ENCODE measurements at regions of chr3 and their contacts with region 1.

Region 1: DNA sequence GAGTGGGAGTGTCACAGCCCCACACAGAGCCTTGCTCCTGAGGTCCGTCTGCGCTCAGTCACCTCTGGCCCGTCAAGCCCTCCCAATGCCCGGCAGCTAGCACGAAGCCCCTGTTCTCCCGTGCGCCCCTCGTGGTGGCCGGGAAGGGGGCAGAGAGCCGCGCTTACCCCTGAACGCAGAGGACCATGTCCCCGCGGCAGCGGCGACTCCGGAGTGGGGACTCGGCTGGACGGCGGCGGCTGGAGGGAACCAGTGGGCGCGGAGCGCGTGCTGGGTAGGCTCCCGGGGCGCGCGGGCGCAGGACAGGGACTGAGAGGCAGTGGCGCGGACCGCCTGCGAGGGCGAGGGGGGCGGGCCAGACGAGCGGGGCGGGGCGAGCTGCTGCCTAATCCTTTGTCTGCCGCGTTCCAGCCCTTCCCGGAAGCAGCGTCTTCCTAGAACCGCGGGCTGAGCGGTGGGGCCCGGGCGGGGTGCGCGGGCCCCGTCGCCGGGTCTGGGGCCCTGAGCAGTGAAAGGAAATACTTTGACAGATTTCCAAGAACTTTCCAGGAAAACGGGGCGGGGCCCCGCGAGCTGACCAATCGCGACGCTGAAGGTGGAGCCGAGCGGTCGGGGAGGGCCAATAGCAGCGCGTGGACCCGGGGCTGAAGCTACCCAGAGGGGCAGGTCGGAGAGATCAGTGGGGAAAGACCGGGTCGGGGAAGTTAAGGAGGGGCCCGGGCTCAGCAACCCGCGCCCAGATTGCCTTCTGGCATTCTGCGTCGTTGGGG is at the start of gene CISH:
- DNase-seq: peak; percentile 100
- H3K4me3 Mint-ChIP-seq: peak within 1 kb of the TSS; percentile 93
- H3K27ac Mint-ChIP-seq: peak within 1 kb of the TSS; percentile 98
- H3K4me1 Mint-ChIP-seq: peaks cover 37% of the 10 kb centered on the region
- H3K27me3 Mint-ChIP-seq: no peaks in the 10 kb centered on the region
- total RNA-seq, gene CISH: 359 and 361 TPM in 2 replicates

Region 2: DNA sequence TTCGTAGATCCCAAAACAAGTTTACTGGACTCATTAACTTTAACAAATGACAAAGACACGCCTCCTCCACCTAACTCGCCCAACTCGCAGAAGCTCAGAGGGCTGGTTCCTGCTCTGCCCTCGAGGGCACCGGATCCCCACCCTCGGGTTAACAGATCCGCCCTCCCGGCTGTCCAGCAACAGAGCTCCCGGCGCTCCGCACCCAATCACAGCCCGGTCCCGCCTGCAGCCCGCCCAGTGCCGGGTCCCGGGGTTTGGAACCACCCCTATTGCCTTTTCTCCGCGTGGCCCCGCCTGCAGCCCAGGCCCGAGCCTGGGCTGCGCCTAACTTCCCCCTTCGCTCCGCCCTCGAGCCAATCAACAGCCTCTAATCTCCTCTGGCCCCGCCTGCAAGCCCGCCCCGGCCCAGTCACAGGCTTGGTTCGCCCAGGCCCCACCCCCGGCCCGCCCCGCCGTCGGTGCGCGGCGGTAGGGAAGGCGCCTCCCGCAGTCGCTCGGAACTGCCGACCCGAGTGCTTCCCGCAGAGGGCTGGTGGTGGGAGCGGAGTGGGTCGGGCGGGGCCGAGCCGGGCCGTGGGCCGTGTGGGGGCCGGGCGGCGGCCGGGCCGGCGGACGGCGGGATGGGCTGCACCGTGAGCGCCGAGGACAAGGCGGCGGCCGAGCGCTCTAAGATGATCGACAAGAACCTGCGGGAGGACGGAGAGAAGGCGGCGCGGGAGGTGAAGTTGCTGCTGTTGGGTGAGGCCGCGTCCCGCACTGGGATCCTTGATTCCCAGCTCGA is 375.7 kb before region 1 on chr3 and contains the start of gene GNAI2:
- intact Hi-C with region 1: loop called (anchors 5 kb)
- DNase-seq: peak; percentile 100
- H3K4me3 Mint-ChIP-seq: peak within 1 kb of the TSS; percentile 99
- H3K27ac Mint-ChIP-seq: peak within 1 kb of the TSS; percentile 94
- H3K4me1 Mint-ChIP-seq: peaks cover 31% of the 10 kb centered on the region
- H3K27me3 Mint-ChIP-seq: no peaks in the 10 kb centered on the region
- total RNA-seq, gene GNAI2: 225 and 232 TPM in 2 replicates

Region 3: GRCh38 chr3:50519471-50520089 is 92.1 kb before region 1 on chr3:
- intact Hi-C with region 1: loop called (anchors 1 kb)
- DNase-seq: peak; percentile 93
- H3K4me3 Mint-ChIP-seq: no peak overlapping the region
- H3K27ac Mint-ChIP-seq: no peak overlapping the region
- H3K4me1 Mint-ChIP-seq: peaks cover 6% of the 10 kb centered on the region
- H3K27me3 Mint-ChIP-seq: peaks cover 26% of the 10 kb centered on the region

Region 4: GRCh38 chr3:50600841-50601591 is 10.6 kb before region 1 on chr3:
- intact Hi-C with region 1: loop called (anchors 1 kb)
- DNase-seq: peak; percentile 95
- H3K4me3 Mint-ChIP-seq: peak overlapping the region; percentile 93
- H3K27ac Mint-ChIP-seq: peak overlapping the region; percentile 98
- H3K4me1 Mint-ChIP-seq: peaks cover 74% of the 10 kb centered on the region
- H3K27me3 Mint-ChIP-seq: no peaks in the 10 kb centered on the region

Region 5: GRCh38 chr3:50652709-50653108 is 41.1 kb after region 1 on chr3:
- intact Hi-C with region 1: loop called (anchors 1 kb)
- DNase-seq: peak; percentile 83
- H3K4me3 Mint-ChIP-seq: no peak overlapping the region
- H3K27ac Mint-ChIP-seq: peak overlapping the region; percentile 5
- H3K4me1 Mint-ChIP-seq: peaks cover 23% of the 10 kb centered on the region
- H3K27me3 Mint-ChIP-seq: no peaks in the 10 kb centered on the region

Region 6: GRCh38 chr3:51371943-51372557 is 760.4 kb after region 1 on chr3:
- intact Hi-C with region 1: loop called (anchors 1 kb)
- DNase-seq: peak; percentile 90
- H3K4me3 Mint-ChIP-seq: no peak overlapping the region
- H3K27ac Mint-ChIP-seq: no peak overlapping the region
- H3K4me1 Mint-ChIP-seq: peaks cover 2% of the 10 kb centered on the region
- H3K27me3 Mint-ChIP-seq: no peaks in the 10 kb centered on the region

Measured in activated CD4-positive, alpha-beta T cell treated with anti-CD3 and anti-CD28 coated beads, Interleukin-2, amount 10 ng/mL, durations not matched to agents 24 days and 14 days (primary cell).